Ascending aorta (tissue), 2 donors: ENCODE measurements at regions of chr1 and their contacts with region 1.

Region 1: GRCh38 chr1:165697881-165698760 is at the start of gene ALDH9A1:
- DNase-seq: peak; percentile 63 to 95
- H3K4me3 ChIP-seq: peak within 1 kb of the TSS; percentile 85 to 86
- H3K27ac ChIP-seq: peak within 1 kb of the TSS; percentile 95 to 97
- H3K4me1 ChIP-seq: peaks cover 4 to 12% of the 10 kb centered on the region in 2 donors
- H3K27me3 ChIP-seq: no peaks in the 10 kb centered on the region
- CTCF ChIP-seq: peak; percentile 8 to 37 (median 17)
- total RNA-seq, gene ALDH9A1: 58.0 TPM

Region 2: DNA sequence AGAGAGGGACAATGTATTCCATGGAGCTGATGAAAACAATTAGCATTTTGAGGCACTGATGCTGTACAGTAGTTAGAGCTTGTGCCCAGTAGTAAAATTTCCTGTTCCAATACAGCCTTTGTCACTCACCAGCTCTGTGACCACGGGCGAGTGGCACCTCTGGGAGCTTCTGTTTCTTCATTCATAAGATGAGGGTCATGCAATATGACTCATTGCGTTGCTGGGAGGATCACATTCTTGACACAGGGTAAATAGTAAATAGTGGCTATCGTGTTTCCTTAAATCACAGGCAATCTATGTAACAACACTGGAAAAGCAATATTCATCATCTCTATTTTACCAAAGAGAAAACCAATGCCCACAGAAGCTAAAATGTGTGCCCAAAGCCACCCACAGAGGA is 158.8 kb before region 1 on chr1:
- intact Hi-C with region 1: no loop called
- DNase-seq: no peak
- H3K4me3 ChIP-seq: no peak overlapping the region
- H3K27ac ChIP-seq: no peak overlapping the region
- H3K4me1 ChIP-seq: peaks cover 0 to 3% of the 10 kb centered on the region in 2 donors
- H3K27me3 ChIP-seq: no peaks in the 10 kb centered on the region
- CTCF ChIP-seq: no peak

Region 3: DNA sequence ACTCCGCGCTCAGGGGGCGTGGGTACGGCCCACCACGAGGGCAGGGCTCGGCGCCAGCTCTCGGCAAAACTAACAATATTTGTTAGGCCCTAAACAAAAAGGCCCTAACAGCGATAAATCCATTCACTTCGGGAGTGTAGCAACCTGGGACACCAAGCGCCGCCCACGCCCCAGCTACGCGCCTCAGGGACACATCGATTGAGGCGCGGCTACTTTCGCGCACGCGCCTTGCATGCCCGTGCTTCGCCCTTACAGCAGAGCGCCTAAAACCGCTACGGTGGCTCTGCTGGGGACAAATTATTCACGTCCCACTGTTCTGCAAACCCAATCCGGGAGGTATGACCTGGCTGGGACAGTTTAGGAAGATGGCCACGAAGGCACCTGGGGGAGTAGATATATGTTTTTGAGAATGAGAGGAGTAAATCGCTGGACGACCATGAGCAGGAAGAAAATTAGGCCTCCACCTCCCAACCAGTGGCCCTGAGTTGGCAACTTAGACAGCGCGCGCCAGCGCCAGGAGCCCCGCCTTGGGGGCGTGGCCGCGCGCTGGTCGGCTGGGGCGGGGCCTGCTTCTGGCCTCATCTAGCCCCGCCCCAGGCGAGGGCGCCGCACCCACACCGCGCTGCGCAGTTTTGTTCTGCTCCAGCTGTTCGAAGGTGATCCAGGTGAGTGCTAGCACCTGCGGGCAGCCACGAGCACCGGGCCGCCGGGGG is 67.3 kb before region 1 on chr1 and contains the start of gene MGST3:
- intact Hi-C with region 1: loop called (anchors 1 kb)
- DNase-seq: peak; percentile 80 to 98
- H3K4me3 ChIP-seq: peak within 1 kb of the TSS; percentile 71 to 90
- H3K27ac ChIP-seq: peak within 1 kb of the TSS; percentile 90 to 91
- H3K4me1 ChIP-seq: peaks cover 3 to 20% of the 10 kb centered on the region in 2 donors
- H3K27me3 ChIP-seq: no peaks in the 10 kb centered on the region
- CTCF ChIP-seq: no peak
- total RNA-seq, gene MGST3: 177 TPM

Region 4: DNA sequence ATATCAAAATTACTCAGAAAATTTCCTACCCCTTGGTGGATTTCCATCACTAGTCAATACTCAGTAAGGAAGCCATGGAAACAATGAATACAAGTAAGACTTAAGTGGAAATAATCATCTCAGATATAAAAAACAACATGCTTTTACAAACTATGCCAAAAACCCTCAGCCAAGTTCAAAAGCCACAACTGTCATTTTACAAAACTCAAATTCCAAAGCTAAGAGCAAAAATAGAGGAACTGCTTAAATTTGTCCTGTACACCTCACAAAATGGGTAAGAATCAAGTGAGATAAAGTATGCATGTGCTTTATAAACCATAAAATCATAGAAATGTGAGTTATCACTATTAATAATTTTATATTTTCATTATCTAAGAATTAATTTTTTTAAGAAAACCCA is 61.0 kb after region 1 on chr1:
- intact Hi-C with region 1: no loop called
- DNase-seq: no peak
- H3K4me3 ChIP-seq: no peak overlapping the region
- H3K27ac ChIP-seq: no peak overlapping the region
- H3K4me1 ChIP-seq: no peaks in the 10 kb centered on the region
- H3K27me3 ChIP-seq: no peaks in the 10 kb centered on the region
- CTCF ChIP-seq: no peak

Region 5: GRCh38 chr1:165898837-165899236 is 200.7 kb after region 1 on chr1:
- intact Hi-C with region 1: loop called (anchors 2 kb)
- DNase-seq: peak; percentile 65 to 91
- H3K4me3 ChIP-seq: no peak overlapping the region
- H3K27ac ChIP-seq: peak overlapping the region; percentile 93 to 95
- H3K4me1 ChIP-seq: peaks cover 21 to 47% of the 10 kb centered on the region in 2 donors
- H3K27me3 ChIP-seq: no peaks in the 10 kb centered on the region
- CTCF ChIP-seq: no peak

Region 6: DNA sequence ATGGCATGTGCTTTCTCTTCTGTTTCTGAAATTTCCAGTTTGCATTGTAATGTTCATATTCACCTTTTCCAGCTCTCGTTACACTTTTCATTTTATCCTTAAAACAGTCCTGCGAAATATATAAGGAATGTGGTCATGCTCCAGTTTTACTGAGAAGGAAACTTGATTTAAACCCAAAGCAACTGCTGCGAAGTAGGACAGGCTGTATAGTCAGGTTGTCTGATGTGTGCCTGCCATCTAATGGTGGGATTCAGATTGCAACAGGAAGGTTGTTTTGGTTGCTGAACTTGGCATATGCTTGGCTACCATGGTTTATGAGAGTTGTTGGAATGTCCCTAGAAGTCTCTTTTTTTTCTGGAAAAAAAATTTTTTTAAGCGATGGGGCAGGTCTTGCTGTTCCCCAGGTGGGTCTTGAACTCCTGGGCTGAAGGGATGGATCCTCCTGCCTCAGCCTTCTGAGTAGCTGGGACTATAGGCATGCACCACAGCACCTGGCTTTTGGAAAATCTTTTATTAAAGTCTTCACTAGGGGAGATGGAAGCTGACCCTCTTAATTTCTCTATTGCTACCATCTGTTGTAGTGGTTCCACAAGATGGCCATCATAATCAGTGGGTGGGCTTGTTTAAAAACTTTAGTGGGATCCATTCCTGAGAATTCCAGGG is 216.1 kb after region 1 on chr1:
- intact Hi-C with region 1: loop called (anchors 1 kb)
- DNase-seq: peak in 1 of 2 donors; percentile 84
- H3K4me3 ChIP-seq: no peak overlapping the region
- H3K27ac ChIP-seq: peak overlapping the region in 1 of 2 donors; percentile 32
- H3K4me1 ChIP-seq: peaks cover 0 to 3% of the 10 kb centered on the region in 2 donors
- H3K27me3 ChIP-seq: no peaks in the 10 kb centered on the region
- CTCF ChIP-seq: peak; percentile 86 to 91 (median 87)

Region 7: DNA sequence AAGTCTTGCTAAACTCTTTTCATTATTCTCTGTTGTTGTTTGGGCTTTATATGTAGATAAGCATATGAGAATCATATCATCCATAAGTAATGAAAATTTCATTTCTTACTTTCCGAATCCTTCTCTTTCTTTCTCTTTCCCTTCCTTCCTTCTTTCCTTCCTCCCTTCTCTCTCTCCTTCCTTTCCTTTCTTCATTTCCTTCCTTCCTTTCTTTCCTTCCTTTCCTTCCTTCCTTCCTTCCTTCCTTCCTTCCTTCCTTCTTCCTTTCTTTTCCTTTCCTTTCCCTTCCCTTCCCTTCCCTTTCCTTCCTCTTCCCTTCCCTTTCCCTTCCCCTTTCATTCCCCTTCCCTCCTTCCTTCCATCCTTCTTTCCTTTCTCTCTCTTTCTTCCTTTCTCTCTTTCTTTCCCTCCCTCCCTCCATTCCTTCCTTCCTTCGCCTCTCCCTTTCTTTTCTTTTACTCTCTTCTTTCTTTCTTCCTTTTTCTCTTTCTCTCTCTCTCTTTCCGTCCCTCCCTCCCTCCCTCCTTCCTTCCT is 276.5 kb after region 1 on chr1:
- intact Hi-C with region 1: no loop called
- DNase-seq: no peak
- H3K4me3 ChIP-seq: no peak overlapping the region
- H3K27ac ChIP-seq: no peak overlapping the region
- H3K4me1 ChIP-seq: no peaks in the 10 kb centered on the region
- H3K27me3 ChIP-seq: no peaks in the 10 kb centered on the region
- CTCF ChIP-seq: no peak